Activated CD8-positive, alpha-beta T cell treated with anti-CD3 and anti-CD28 coated beads for 36 hours (primary cell): ENCODE measurements at regions of chr4 and their contacts with region 1.

Region 1: GRCh38 chr4:83034630-83035494 is at the start of gene COPS4:
- DNase-seq: peak; percentile 98
- ATAC-seq: peak; percentile 99
- H3K4me3 Mint-ChIP-seq: peak within 1 kb of the TSS; percentile 95
- H3K27ac Mint-ChIP-seq: peak within 1 kb of the TSS; percentile 100
- H3K4me1 Mint-ChIP-seq: peaks cover 26% of the 10 kb centered on the region
- H3K27me3 Mint-ChIP-seq: no peaks in the 10 kb centered on the region
- CTCF ChIP-seq: no peak
- total RNA-seq, gene COPS4: 38.4 to 38.8 TPM

Region 2: DNA sequence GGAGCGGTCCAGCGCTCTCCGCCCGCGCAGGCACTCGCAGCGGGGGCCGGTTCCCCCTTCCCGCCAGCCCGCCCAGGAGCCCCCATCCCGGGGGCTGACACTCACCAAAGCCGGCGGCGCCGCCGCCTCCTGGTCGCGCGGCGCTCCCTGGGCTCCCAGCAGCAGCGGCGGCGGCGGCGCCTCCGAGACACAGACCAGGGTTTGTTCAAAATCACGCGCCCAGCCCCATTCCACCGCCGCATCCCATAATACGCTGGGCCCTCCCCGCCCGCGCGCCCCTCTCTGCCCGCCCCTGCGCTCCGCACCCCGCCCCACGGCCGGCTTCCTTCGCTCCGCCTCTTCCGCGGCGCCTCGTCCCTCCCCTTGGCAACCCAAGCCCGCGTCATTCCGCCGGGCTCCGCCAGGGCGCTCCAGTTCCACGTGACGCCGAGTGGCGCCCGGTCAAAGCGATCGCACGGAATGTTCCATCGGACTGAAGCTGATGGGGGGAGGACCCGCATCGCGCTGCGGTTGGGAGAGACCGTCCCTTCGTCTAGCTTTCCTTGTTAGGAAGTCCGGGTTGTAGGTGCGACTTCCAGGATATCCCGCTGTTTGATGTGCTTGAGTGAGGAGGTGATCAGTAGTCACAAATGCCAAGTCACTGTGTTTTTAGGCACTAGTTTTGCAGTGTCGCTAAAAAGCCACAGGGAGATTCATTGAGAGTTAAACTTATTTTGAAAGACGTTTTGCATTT is 22.0 kb before region 1 on chr4:
- CTCF ChIA-PET with region 1: interaction called, 11 read pairs
- POLR2A ChIA-PET with region 1: interaction called, 30 read pairs
- intact Hi-C with region 1: loop called (anchors 2 kb)
- DNase-seq: peak; percentile 97
- ATAC-seq: peak; percentile 91
- H3K4me3 Mint-ChIP-seq: peak overlapping the region; percentile 97
- H3K27ac Mint-ChIP-seq: peak overlapping the region; percentile 91
- H3K4me1 Mint-ChIP-seq: peaks cover 27% of the 10 kb centered on the region
- H3K27me3 Mint-ChIP-seq: no peaks in the 10 kb centered on the region
- CTCF ChIP-seq: no peak